ENCODE measurements at regions of chr14 and their contacts with region 1.

Region 1: GRCh38 chr14:32469388-32470160 is 140.5 kb downstream of the AKAP6 start:
- DNase-seq: no peak
- H3K4me3 Mint-ChIP-seq: no peak overlapping the region
- H3K27ac Mint-ChIP-seq: peak overlapping the region; percentile 60
- H3K4me1 Mint-ChIP-seq: peaks cover 41% of the 10 kb centered on the region
- H3K27me3 Mint-ChIP-seq: no peaks in the 10 kb centered on the region
- CTCF ChIP-seq: no peak

Region 2: DNA sequence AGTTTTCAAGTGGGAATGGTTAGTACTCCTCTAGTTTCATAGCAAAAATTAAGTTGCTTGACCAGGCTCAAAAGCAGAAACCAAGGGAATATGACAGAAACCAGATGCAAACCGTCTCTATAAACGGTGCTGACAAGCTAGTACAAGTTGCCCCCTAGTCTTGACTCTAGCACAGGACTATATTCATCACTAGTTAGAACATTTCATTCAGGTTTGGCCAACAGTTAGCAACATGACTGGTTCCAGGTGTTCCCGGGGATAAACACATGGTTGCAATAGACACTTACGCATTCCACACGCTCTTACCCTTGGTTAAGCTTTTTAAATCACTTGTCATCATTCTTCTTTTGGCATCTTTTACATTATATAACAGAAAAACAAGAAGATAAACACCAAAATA is 1743.8 kb before region 1 on chr14:
- CTCF ChIA-PET with region 1: no interaction called
- intact Hi-C with region 1: no loop called
- DNase-seq: no peak
- H3K4me3 Mint-ChIP-seq: no peak overlapping the region
- H3K27ac Mint-ChIP-seq: no peak overlapping the region
- H3K4me1 Mint-ChIP-seq: no peaks in the 10 kb centered on the region
- H3K27me3 Mint-ChIP-seq: no peaks in the 10 kb centered on the region
- CTCF ChIP-seq: no peak

Region 3: DNA sequence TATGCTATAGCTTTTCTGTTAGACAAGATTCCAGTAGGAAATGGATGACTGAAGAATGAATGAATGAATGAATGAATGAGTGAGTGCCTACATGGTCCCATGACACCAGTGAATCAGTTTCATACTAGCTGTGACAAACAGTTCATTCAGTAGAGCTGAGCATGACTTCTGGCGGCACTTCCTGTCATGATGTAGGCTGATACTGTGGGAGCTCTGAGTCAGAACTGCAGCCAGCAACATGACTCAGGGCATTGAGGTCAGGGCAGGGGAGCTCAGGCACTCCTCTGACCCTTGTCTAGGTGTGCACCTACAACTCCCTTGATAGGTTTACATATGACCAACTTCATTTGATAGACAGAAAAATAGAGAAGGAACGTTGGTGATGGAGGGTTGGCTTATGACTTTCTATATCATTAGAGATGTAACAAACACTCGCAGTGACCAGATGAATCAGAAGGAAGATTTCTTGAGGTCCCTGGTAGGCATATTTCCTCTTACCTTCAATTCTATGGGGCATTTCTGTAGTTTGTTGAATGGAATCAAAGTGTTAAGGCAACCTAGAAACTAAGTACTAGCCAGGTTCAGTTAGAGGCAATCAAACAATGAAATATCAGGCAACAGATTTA is 531.7 kb before region 1 on chr14:
- CTCF ChIA-PET with region 1: no interaction called
- intact Hi-C with region 1: loop called (anchors 2 kb)
- DNase-seq: peak; percentile 76
- H3K4me3 Mint-ChIP-seq: no peak overlapping the region
- H3K27ac Mint-ChIP-seq: peak overlapping the region; percentile 94
- H3K4me1 Mint-ChIP-seq: peaks cover 46% of the 10 kb centered on the region
- H3K27me3 Mint-ChIP-seq: no peaks in the 10 kb centered on the region
- CTCF ChIP-seq: no peak

Region 4: GRCh38 chr14:32259368-32260013 is 210.1 kb before region 1 on chr14:
- CTCF ChIA-PET with region 1: interaction called, 15 read pairs
- intact Hi-C with region 1: loop called (anchors 1 kb)
- DNase-seq: peak; percentile 37
- H3K4me3 Mint-ChIP-seq: no peak overlapping the region
- H3K27ac Mint-ChIP-seq: no peak overlapping the region
- H3K4me1 Mint-ChIP-seq: peaks cover 21% of the 10 kb centered on the region
- H3K27me3 Mint-ChIP-seq: no peaks in the 10 kb centered on the region
- CTCF ChIP-seq: no peak

Region 5: DNA sequence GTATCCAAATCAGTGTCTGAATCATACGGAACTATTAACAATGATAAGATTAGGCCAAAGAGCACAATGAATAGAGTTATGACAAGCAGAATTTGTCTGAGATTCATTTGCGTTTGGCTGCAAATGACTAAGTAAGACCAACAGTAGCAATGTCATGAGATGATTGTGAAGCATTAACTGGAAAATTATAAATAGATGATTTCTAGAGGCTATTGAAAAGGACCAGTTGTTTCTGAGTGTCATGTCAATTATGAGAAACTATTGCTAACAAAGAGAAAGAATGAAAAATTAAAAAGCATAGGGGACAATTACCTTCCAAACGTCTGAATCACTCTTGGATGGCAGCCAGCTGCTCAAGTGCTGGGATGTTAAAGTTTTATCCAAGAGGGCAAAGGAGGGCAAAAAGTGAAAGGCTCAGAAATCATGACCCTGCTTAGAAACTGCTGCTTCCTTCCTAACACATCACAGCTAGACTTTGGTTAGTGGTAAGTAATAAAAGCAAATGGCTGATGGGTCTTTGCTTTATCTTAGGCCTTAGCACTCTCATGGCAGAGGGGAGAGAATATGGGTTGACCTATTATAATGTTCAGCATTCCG is 51.5 kb before region 1 on chr14:
- CTCF ChIA-PET with region 1: interaction called, 5 read pairs
- intact Hi-C with region 1: loop called (anchors 1 kb)
- DNase-seq: peak; percentile 70
- H3K4me3 Mint-ChIP-seq: no peak overlapping the region
- H3K27ac Mint-ChIP-seq: peak overlapping the region; percentile 34
- H3K4me1 Mint-ChIP-seq: peaks cover 41% of the 10 kb centered on the region
- H3K27me3 Mint-ChIP-seq: no peaks in the 10 kb centered on the region
- CTCF ChIP-seq: no peak

Region 6: DNA sequence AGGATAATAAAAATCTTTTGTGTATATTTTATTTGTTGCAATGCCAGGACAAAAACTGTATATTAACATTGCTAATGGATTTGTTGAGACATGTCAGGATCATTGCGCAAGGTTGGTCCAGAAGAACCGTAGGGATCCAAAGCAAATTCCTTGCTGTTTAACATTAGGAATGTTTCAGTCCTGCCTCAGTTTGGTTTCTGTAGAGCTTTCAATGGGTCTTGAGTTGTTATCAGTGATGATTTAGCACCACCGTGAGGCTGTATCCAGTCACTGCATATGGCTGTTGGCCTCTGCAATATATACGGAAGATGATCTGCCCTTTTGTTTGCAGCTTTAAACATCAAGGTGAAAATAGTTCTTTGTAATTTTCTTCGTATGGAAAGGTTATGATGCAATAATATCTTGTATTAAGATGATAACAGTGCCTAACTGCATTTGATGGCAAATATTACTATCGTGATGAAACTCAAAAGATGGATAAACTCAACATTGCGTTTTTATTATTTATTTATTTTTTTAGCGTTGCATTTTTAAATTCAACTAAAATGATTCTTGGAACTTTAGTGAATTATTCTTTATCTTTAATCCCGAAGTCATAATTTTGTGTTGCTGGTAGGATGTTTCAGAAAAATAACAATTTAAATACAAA is 90.8 kb after region 1 on chr14:
- CTCF ChIA-PET with region 1: interaction called, 6 read pairs
- intact Hi-C with region 1: loop called (anchors 1 kb)
- DNase-seq: peak; percentile 64
- H3K4me3 Mint-ChIP-seq: no peak overlapping the region
- H3K27ac Mint-ChIP-seq: no peak overlapping the region
- H3K4me1 Mint-ChIP-seq: no peaks in the 10 kb centered on the region
- H3K27me3 Mint-ChIP-seq: no peaks in the 10 kb centered on the region
- CTCF ChIP-seq: peak; percentile 75